Activated T-helper 1 cell treated with anti-CD3 and anti-CD28 coated beads, Interleukin-12 subunit alpha, Interleukin-12 subunit beta, Interleukin-2, Interleukin-4 antibody, amounts not matched to agents 30 ng/mL and 10 ng/mL and 1 ng/mL, durations not matched to agents 14 hours and 24 hours and 36 hours (primary cell): ENCODE measurements at regions of chr11 and their contacts with region 1.

Region 1: DNA sequence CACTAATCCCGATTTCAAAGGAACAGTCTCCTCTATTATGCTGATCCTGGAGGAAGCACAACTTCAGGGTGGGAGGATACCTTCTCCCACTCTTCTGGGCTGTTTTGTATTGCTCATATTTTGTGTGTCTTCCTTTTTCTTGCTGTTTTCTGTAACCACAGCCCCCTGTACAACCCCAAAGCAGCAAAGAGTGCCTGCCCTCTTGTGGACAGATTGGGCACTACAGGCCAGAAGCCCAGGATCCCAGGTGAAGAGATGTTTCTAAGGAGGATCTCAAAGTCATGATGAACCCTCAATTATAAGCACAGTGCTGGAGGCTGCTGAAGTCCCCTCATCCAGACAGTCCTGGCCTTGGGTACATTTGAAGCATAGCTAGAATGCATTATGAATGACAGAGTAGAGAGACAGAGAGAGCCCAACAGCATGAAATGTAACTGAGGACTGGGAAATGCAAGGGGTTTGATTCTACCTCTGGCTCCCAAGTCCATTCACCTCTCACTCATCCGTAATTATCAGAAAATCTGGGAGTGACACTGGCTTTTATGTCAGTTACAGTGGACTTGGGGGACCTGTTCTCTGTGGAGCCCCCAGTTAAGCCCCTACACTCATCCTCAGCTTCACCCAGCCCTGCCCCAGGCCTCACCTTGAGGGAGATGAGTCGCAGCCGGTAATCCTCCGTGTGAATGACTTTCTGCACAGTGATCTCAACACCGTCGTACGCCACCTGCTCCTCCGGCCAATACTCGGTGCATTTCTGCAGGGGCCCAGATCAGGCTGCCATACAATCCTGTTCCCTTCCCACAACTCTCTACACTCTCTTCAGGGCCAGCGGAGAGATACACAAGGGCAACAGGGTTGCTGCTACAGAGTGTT is 6.2 kb upstream of the IGSF22 start:
- DNase-seq: peak; percentile 47
- H3K4me3 Mint-ChIP-seq: no peak overlapping the region
- H3K27ac Mint-ChIP-seq: no peak overlapping the region
- H3K4me1 Mint-ChIP-seq: no peaks in the 10 kb centered on the region
- H3K27me3 Mint-ChIP-seq: no peaks in the 10 kb centered on the region

Region 2: GRCh38 chr11:18768472-18768901 is 36.3 kb after region 1 on chr11:
- intact Hi-C with region 1: loop called (anchors 1 kb)
- DNase-seq: no peak
- H3K4me3 Mint-ChIP-seq: no peak overlapping the region
- H3K27ac Mint-ChIP-seq: no peak overlapping the region
- H3K4me1 Mint-ChIP-seq: peaks cover 34% of the 10 kb centered on the region
- H3K27me3 Mint-ChIP-seq: peaks cover 6% of the 10 kb centered on the region

Region 3: DNA sequence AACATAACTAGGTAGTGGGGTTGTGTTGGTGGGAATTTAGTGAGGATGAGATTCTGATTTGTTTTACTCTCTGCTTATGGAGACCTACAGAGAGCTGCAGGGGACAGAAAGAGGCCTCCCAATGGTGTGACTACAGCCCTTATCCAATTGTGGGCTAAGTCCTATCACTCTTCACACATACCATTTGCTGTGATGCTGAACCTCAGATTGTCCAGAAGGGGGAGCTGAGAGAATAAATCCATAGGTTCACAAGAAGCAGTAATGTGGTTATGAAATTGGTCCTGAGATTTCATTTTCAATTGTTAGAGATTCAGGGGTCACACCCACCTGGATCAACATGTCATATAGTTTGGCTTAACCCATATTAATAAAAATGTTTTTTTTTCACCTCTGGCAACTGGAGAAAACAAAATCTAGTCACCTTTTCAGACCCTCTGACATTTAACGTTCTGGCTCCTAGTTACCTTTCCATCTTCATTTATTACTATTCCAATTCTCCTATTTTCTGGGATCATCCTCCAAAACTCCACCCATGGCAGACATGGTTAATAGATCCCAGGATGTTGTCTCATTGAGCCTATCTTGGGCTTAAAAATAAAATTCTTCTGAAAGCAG is 112.7 kb after region 1 on chr11:
- intact Hi-C with region 1: no loop called
- DNase-seq: no peak
- H3K4me3 Mint-ChIP-seq: no peak overlapping the region
- H3K27ac Mint-ChIP-seq: no peak overlapping the region
- H3K4me1 Mint-ChIP-seq: no peaks in the 10 kb centered on the region
- H3K27me3 Mint-ChIP-seq: peaks cover 24% of the 10 kb centered on the region